ENCODE measurements at regions of chr5 and their contacts with region 1.

Region 1: DNA sequence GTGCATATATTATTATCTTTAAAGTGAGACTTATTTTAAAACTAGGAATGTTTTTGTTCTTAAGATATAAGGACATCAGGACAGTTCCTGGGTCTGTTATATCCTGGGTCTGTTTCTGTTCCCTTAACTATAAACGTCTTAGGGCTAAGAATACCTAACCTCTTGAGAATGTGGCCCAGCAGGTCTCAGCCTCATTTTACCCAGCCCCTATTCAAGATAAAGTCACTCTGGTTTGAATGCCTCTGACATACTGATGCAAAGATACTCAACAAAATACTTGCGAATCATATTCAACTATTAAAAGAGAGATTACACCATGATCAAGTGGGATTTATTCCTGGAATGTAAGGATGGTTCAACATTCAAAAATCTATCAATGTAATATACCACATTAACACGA is 51.0 kb downstream of the STK10 start:
- DNase-seq: no peak
- H3K4me3 ChIP-seq: no peak overlapping the region
- H3K27ac ChIP-seq: no peak overlapping the region
- H3K4me1 ChIP-seq: peaks cover 0 to 4% (median 0%) of the 10 kb centered on the region in 4 donors
- H3K27me3 ChIP-seq: no peaks in the 10 kb centered on the region
- CTCF ChIP-seq: no peak
- EP300 ChIP-seq: no peak
- POLR2A ChIP-seq: no peak

Region 2: DNA sequence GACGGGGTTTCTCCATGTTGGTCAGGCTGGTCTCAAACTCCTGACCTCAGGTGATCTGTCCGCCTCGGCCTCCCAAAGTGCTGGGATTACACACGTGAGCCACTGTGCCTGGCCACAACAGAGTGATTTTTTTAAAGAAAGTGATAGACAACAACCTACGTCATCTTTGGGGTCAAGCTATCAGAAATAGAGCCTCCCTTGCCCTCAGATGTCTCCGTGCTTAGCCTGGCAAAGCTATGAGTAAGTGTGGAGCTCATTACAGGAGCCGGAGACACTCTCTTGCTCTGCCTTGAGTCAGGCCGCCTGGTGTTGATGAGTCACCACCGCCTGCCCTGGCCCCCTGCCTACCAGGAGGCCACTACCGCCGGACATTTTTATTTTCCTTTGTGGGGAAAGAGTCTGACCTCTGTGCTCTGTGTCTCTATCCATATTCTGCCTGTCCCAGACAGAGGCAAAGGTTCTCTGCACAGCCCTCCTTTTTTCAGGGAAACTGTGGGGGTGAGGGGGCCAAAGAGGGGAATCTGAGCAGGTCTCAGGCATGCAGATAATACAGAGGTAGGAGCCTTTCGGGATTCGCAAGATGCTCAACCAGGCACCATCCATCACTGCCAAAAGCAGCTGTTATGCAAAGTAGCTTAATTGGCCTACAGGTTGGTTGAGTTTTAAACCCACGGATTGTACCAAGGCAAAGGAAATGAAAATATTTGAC is 1627.4 kb after region 1 on chr5:
- in situ Hi-C with region 1: no loop called
- intact Hi-C with region 1: loop called (anchors 5 kb)
- DNase-seq: peak; percentile 61
- H3K4me3 ChIP-seq: no peak overlapping the region
- H3K27ac ChIP-seq: peak overlapping the region in 3 of 4 donors; percentile 4 to 29 (median 20)
- H3K4me1 ChIP-seq: peaks cover 0 to 11% (median 5%) of the 10 kb centered on the region in 4 donors
- H3K27me3 ChIP-seq: no peaks in the 10 kb centered on the region
- CTCF ChIP-seq: no peak
- EP300 ChIP-seq: no peak
- POLR2A ChIP-seq: no peak

Measured in transverse colon (tissue), 4 donors.